ENCODE measurements at regions of chr2 and their contacts with region 1.

Region 1: DNA sequence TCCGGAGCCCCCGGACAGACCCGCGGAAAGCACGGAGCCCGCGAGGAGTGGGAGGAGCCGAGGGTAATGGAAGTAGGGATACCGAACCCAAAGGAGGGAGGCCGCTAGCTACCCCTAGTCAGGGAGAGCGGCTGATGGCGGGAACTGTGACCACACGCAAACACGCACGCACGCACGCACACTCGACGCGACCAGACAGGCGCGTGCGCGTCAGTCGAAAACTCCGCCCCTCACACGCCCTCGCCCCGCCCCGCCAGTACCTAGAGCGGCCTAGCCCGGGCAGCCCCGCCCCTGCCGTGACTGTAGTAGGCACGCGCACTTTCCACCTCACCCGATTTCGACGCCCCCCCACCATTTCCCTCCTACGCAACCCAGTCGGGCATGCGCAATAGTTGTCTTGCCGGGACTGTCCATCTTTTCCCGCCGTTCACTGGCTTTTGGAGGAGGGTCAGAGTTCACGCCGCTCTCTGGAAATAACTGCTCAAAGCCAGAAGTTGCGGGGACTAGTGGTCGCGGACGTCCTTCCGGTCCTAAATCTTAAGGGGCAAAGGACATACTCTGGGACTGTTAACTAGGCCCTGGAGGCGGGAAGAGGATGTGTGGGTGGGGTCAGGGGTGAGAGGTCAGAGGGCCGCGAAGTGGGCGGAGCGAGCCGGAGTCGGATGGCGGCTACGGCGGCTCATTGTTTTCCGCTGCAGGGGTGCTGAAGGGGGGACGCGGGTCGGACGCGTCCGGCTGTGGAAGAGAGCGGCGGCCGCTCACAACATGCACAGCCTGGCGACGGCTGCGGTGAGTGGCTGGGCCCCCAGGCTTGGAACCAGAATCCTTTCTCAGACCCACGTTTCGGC is at the starts of genes CNOT9 and USP37:
- DNase-seq: peak; percentile 99 to 100 (median 100)
- ATAC-seq: peak; percentile 95
- H3K4me3 ChIP-seq: peak within 1 kb of the TSS; percentile 78
- H3K4me3 Mint-ChIP-seq: peak within 1 kb of the TSS; percentile 90 to 100 (median 98)
- H3K27ac ChIP-seq: peak within 1 kb of the TSS; percentile 96
- H3K27ac Mint-ChIP-seq: peak within 1 kb of the TSS; percentile 97 to 100 (median 99)
- H3K4me1 ChIP-seq: peaks cover 22 to 31% of the 10 kb centered on the region in 2 donors
- H3K4me1 Mint-ChIP-seq: peaks cover 45 to 73% (median 64%) of the 10 kb centered on the region in 7 donors
- H3K27me3 ChIP-seq: no peaks in the 10 kb centered on the region
- H3K27me3 Mint-ChIP-seq: no peaks in the 10 kb centered on the region
- total RNA-seq, gene CNOT9: 44.7 to 99.6 (median 53.8) TPM
- total RNA-seq, gene USP37: 16.6 to 36.3 (median 28.1) TPM

Region 2: DNA sequence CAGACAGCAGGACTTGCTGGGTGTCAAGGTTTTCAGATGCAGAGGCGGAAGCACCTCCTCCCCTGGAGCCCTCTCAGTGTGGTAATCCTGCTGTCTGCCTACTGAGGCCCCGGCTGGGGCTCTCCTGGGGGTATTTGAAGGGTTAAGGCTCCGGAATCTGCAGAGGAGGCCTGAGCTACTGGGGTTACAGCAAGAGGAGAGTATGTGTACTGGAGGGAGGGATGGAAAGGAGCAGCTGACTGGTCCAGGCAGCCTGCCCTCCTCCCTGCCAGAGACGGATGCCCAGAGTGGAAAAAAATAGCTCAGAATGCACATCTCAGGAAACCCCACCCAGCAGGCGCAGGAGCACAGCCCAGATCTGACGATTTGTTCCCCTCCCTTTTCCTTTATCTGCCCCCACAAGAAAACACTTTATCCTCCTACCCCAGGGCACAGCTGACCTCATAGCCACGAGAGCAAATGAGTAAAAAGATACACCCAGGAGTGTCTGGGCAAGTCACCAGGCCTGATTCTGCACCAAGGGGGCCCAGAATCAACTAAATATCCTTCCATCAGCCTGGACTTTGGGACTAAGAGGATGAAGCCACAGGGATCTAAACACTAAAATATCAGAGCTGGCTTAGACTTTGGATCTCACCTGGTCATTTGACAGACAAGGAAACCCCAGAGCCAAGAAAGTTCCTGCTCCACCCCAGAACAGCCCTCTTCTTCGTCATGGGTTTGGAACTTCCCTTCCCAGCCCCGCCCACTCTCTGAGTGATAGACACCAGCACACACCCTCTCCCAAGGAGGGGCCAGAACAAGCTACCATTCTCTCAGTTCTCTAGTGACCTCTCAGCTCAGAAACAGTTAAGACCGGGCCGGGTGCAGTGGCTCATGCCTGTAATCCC is 281.6 kb before region 1 on chr2:
- CTCF ChIA-PET with region 1: no interaction called
- POLR2A ChIA-PET with region 1: no interaction called
- intact Hi-C with region 1: loop called (anchors 1 kb)
- DNase-seq: peak; percentile 53 to 90 (median 78)
- ATAC-seq: peak; percentile 87
- H3K4me3 ChIP-seq: peak overlapping the region; percentile 66
- H3K4me3 Mint-ChIP-seq: peak overlapping the region; percentile 85 to 97 (median 94)
- H3K27ac ChIP-seq: peak overlapping the region; percentile 93
- H3K27ac Mint-ChIP-seq: peak overlapping the region; percentile 95 to 99 (median 99)
- H3K4me1 ChIP-seq: peaks cover 74 to 77% of the 10 kb centered on the region in 2 donors
- H3K4me1 Mint-ChIP-seq: peaks cover 53 to 87% (median 76%) of the 10 kb centered on the region in 7 donors
- H3K27me3 ChIP-seq: no peaks in the 10 kb centered on the region
- H3K27me3 Mint-ChIP-seq: no peaks in the 10 kb centered on the region

Region 3: GRCh38 chr2:218582076-218582475 is 13.7 kb after region 1 on chr2:
- CTCF ChIA-PET with region 1: no interaction called
- POLR2A ChIA-PET with region 1: interaction called, 3 read pairs
- intact Hi-C with region 1: loop called in 1 of 2 experiments (anchors 2 kb)
- DNase-seq: no peak
- ATAC-seq: no peak
- H3K4me3 ChIP-seq: no peak overlapping the region
- H3K4me3 Mint-ChIP-seq: peak overlapping the region in 1 of 10 donors; percentile 24
- H3K27ac ChIP-seq: no peak overlapping the region
- H3K27ac Mint-ChIP-seq: peak overlapping the region in 2 of 9 donors; percentile 14 to 60
- H3K4me1 ChIP-seq: peaks cover 0 to 4% of the 10 kb centered on the region in 2 donors
- H3K4me1 Mint-ChIP-seq: peaks cover 7 to 41% (median 26%) of the 10 kb centered on the region in 7 donors
- H3K27me3 ChIP-seq: no peaks in the 10 kb centered on the region
- H3K27me3 Mint-ChIP-seq: no peaks in the 10 kb centered on the region

Region 4: GRCh38 chr2:218659258-218659987 is 91.0 kb after region 1 on chr2 and contains the starts of genes BCS1L and ZNF142:
- CTCF ChIA-PET with region 1: no interaction called
- POLR2A ChIA-PET with region 1: interaction called, 7 read pairs
- intact Hi-C with region 1: loop called (anchors 1 kb)
- DNase-seq: peak; percentile 75 to 95 (median 90)
- ATAC-seq: peak; percentile 99
- H3K4me3 ChIP-seq: peak within 1 kb of the TSS; percentile 83
- H3K4me3 Mint-ChIP-seq: peak within 1 kb of the TSS; percentile 90 to 99 (median 98)
- H3K27ac ChIP-seq: peak within 1 kb of the TSS; percentile 80
- H3K27ac Mint-ChIP-seq: peak within 1 kb of the TSS; percentile 74 to 96 (median 93)
- H3K4me1 ChIP-seq: peaks cover 7 to 15% of the 10 kb centered on the region in 2 donors
- H3K4me1 Mint-ChIP-seq: peaks cover 25 to 45% (median 38%) of the 10 kb centered on the region in 7 donors
- H3K27me3 ChIP-seq: no peaks in the 10 kb centered on the region
- H3K27me3 Mint-ChIP-seq: no peaks in the 10 kb centered on the region
- total RNA-seq, gene BCS1L: 21.4 to 62.0 (median 49.0) TPM
- total RNA-seq, gene ZNF142: 38.7 to 49.8 (median 40.8) TPM

Region 5: GRCh38 chr2:218898109-218898878 is 329.9 kb after region 1 on chr2:
- CTCF ChIA-PET with region 1: no interaction called
- POLR2A ChIA-PET with region 1: no interaction called
- intact Hi-C with region 1: loop called (anchors 5 kb)
- DNase-seq: peak; percentile 50 to 88 (median 72)
- ATAC-seq: peak; percentile 42
- H3K4me3 ChIP-seq: peak overlapping the region; percentile 65
- H3K4me3 Mint-ChIP-seq: peak overlapping the region; percentile 53 to 87 (median 82)
- H3K27ac ChIP-seq: no peak overlapping the region
- H3K27ac Mint-ChIP-seq: peak overlapping the region in 7 of 9 donors; percentile 33 to 92 (median 71)
- H3K4me1 ChIP-seq: peaks cover 40 to 49% of the 10 kb centered on the region in 2 donors
- H3K4me1 Mint-ChIP-seq: peaks cover 38 to 48% (median 42%) of the 10 kb centered on the region in 7 donors
- H3K27me3 ChIP-seq: peaks cover 0 to 3% of the 10 kb centered on the region in 2 donors
- H3K27me3 Mint-ChIP-seq: peaks cover 20 to 75% (median 40%) of the 10 kb centered on the region in 5 donors

Region 6: DNA sequence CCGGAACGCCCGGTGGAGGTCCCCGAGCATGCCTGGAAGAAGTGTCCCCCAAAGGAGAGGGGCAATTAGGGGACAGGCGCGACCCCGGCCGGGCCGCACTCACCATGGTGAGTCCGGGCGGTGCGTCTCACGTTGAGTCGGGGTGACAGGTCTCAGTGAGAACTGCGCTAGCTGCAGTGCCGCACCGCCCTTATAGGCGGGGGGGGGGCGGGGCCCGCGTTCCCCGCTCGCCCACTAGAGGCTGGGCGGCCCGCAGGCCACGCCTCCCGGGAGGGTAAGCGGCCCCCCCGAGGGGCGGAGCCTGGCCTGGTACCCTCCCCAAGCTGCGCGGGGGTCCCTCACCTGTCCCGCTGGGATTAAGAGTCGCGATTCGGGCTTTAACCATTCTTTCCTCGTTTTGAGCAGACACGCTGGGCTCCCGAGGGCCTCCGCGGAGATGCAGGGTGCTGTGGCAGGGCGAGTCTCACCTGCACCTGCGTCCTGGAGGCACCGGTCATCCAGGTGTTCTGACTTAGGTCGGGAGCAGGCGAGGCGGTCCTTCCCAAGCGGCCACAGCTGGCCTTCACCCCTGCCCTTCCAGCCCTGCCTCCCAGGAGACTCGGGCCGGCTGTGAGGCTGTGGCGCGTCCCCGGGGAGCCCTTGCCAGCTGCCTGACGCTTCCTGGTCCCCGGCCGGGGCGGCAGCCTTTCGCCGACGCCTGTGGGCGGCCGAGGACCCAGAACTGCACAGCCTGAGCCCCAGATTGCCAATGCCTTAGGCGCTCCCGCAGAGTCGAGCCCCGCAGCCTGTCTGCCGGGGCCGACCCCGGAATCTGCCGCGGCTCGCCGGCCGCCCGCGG is 685.6 kb after region 1 on chr2 and contains the start of gene TUBA4A:
- CTCF ChIA-PET with region 1: no interaction called
- POLR2A ChIA-PET with region 1: no interaction called
- intact Hi-C with region 1: loop called (anchors 1 to 10 kb)
- DNase-seq: peak; percentile 84 to 94 (median 91)
- ATAC-seq: peak; percentile 92
- H3K4me3 ChIP-seq: peak within 1 kb of the TSS; percentile 79
- H3K4me3 Mint-ChIP-seq: peak within 1 kb of the TSS; percentile 82 to 100 (median 92)
- H3K27ac ChIP-seq: peak within 1 kb of the TSS; percentile 95
- H3K27ac Mint-ChIP-seq: peak within 1 kb of the TSS; percentile 88 to 99 (median 96)
- H3K4me1 ChIP-seq: peaks cover 31 to 38% of the 10 kb centered on the region in 2 donors
- H3K4me1 Mint-ChIP-seq: peaks cover 28 to 54% (median 47%) of the 10 kb centered on the region in 7 donors
- H3K27me3 ChIP-seq: no peaks in the 10 kb centered on the region
- H3K27me3 Mint-ChIP-seq: peaks cover 0 to 3% (median 0%) of the 10 kb centered on the region in 5 donors
- total RNA-seq, gene TUBA4A: 82.9 to 260 (median 183) TPM